ENCODE measurements at regions of chr7 and their contacts with region 1.

Region 1: DNA sequence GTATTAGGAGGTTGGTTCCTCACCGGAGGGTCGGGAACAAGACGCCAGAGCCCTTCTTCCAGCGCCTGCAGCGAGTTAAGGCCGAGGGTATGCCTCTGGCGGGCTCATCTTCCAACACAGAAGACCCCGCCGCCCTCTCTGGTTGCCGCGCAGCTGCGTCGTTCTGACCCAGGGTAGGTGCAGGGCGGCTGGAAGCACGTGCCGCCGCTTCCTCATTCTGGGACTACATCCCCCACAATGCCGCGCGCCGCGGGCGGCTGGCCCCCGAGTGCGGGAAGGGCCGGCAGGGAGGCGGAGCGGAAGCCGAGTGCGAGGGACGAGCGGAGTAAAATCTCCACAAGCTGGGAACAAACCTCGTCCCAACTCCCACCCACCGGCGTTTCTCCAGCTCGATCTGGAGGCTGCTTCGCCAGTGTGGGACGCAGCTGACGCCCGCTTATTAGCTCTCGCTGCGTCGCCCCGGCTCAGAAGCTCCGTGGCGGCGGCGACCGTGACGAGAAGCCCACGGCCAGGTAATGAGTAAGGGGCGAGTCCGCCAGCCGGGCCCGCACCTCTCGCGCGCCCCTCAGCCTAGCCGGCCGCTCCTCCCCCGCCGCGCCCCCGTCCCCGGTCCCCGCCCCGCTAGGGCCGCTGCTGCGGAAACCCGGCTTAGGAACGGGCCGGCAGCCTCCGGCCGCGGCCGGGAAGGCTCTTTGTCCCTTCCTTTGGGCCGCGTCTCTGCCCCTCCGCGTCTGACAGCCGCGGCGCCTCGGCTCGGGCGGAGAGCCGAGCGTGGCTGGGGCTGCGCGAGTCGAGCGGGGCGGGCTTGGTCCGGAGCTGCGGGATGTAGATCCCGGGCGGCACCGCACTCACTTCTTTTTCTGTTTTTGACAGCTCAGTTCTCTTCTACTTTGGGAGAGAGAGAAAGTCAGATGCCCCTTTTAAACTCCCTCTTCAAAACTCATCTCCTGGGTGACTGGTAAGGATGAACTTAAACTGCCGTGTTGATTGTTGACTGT is at the start of gene CCDC126:
- DNase-seq: peak; percentile 75
- H3K4me3 Mint-ChIP-seq: peak within 1 kb of the TSS; percentile 93
- H3K27ac Mint-ChIP-seq: peak within 1 kb of the TSS; percentile 89
- H3K4me1 Mint-ChIP-seq: peaks cover 63% of the 10 kb centered on the region
- H3K27me3 Mint-ChIP-seq: peaks cover 2% of the 10 kb centered on the region
- total RNA-seq, gene CCDC126: 8.2 and 10.7 TPM in 2 replicates

Region 2: DNA sequence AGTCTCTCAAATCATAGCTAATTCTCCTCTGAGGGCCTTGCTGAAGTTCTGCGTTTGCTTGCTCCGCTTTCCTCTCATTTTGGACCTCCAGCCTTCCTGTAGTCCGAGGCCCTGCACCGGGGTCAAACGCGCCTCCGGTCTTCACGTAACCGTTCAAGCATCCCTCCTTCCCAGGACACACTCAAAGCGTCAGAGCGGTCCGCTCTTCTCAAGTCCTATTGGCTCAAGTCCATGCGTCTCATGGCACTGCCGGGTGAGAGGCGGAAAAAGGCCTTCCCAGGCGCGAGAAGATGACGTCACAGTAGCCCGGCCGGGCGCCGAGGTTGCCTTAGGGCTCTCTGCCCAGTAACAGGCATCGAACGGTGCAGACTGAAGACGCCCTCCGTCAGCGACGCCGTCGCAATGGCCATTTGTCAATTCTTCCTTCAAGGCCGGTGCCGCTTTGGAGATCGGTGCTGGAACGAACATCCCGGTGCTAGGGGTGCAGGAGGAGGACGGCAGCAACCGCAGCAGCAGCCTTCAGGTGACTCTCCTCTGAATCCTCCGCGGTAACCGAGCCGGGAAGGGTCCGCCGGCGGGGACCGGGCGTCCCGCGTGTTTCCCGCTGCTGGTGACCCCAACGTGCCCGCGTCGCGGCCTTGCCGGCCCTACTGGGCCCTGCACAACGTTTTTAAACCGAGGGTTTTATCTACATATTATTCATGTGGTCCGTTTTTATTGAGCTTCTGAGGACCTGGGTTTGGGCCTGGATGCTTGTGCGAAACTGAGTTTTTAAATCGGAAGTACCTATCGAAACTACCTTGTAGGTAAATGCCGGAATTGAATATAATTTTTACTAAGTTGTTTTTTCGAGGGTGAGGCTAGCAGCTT is 415.5 kb before region 1 on chr7 and contains the start of gene NUP42:
- intact Hi-C with region 1: loop called (anchors 1 kb)
- DNase-seq: peak; percentile 96
- H3K4me3 Mint-ChIP-seq: peak within 1 kb of the TSS; percentile 90
- H3K27ac Mint-ChIP-seq: peak within 1 kb of the TSS; percentile 99
- H3K4me1 Mint-ChIP-seq: peaks cover 35% of the 10 kb centered on the region
- H3K27me3 Mint-ChIP-seq: peaks cover 8% of the 10 kb centered on the region
- total RNA-seq, gene NUP42: 52.7 and 55.2 TPM in 2 replicates

Region 3: DNA sequence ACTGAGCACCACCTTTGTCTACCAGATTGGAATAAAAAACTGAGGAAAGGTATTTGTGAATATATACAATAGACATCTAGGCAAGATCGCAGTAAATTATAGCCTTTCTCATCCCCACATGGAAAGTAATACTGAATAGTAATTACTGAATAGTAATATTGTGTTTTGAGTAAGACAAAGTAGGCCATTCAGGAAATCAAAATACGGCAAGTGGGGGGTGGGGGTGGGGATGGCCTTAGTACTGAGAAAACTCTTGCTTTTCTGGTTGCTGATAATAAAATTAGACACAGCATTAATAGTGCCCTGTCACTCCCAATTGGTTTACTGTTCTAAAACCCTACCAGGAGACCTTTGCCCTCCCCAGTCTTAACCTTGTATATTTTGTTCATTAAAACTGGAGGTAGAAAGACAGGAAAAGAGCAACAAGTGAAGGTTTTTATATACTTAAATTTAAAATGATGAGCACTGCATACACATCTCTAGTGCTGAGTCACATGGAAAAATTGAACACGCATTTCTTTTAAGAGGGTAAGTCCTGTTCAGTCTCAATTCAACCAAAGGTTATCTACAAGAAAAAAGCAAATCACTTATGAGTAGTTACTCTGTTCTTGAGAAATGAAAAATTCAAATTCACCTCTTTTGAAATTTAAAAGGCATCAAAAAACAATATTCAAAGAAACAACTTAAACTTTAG is 192.7 kb before region 1 on chr7:
- intact Hi-C with region 1: loop called (anchors 1 kb)
- DNase-seq: no peak
- H3K4me3 Mint-ChIP-seq: peak overlapping the region; percentile 7
- H3K27ac Mint-ChIP-seq: peak overlapping the region; percentile 82
- H3K4me1 Mint-ChIP-seq: peaks cover 14% of the 10 kb centered on the region
- H3K27me3 Mint-ChIP-seq: no peaks in the 10 kb centered on the region

Region 4: DNA sequence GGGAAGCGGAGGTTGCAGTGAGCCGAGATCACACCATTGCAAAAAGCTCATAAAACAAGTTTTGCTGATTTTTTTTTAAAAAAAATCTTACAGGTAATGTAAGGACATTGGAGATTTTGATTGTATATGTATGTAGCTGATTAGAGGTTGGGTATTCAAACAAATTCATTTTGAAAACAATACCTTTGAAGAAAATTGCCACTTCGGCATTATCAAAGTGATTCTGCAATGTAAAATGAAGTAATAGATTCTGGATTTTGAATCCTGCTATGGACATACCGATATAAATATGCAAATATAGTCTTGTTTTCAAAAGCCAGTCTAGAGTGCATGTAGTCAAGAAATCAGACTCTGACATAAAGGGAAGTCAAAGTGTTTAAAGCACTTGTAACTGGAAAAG is 114.7 kb before region 1 on chr7:
- intact Hi-C with region 1: no loop called
- DNase-seq: no peak
- H3K4me3 Mint-ChIP-seq: no peak overlapping the region
- H3K27ac Mint-ChIP-seq: no peak overlapping the region
- H3K4me1 Mint-ChIP-seq: no peaks in the 10 kb centered on the region
- H3K27me3 Mint-ChIP-seq: peaks cover 30% of the 10 kb centered on the region

Region 5: DNA sequence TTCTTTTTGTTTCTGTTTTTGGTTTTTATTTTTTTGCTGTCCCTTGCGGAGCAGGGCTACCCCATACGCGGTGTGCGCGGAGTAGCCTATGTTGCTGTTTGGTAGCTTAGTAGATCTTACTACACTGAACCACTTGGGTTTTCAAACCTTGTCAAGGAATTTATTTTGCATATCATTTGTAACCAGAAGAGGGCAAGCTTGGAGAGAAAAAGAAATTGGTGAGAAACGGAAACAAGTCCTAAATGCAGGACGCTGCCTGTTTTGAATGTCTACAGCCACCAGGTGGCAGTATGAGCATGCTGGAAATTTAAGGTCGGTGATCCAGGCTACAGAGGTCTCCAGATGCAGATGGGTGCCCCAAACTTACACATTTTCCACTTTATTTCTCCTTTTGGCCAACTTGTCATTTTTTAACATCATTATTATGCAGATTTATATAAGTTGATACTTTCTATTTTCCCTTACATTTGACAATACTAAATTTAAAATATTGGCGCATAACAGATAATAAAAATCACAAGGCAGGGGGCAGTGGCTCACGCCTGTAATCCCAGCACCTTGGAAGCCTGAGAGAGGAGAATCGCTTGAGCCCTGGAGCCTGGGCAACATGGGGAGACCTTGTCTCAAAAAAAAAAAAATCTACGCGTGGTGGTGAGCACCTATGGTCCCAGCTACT is 50.4 kb before region 1 on chr7:
- intact Hi-C with region 1: loop called (anchors 2 kb)
- DNase-seq: peak; percentile 63
- H3K4me3 Mint-ChIP-seq: no peak overlapping the region
- H3K27ac Mint-ChIP-seq: no peak overlapping the region
- H3K4me1 Mint-ChIP-seq: peaks cover 21% of the 10 kb centered on the region
- H3K27me3 Mint-ChIP-seq: peaks cover 2% of the 10 kb centered on the region

Region 6: GRCh38 chr7:23654508-23654907 is 57.1 kb after region 1 on chr7:
- intact Hi-C with region 1: no loop called
- DNase-seq: no peak
- H3K4me3 Mint-ChIP-seq: no peak overlapping the region
- H3K27ac Mint-ChIP-seq: no peak overlapping the region
- H3K4me1 Mint-ChIP-seq: no peaks in the 10 kb centered on the region
- H3K27me3 Mint-ChIP-seq: peaks cover 1% of the 10 kb centered on the region

Region 7: GRCh38 chr7:23893942-23894891 is 296.8 kb after region 1 on chr7:
- intact Hi-C with region 1: loop called (anchors 1 kb)
- DNase-seq: peak; percentile 24
- H3K4me3 Mint-ChIP-seq: peak overlapping the region; percentile 41
- H3K27ac Mint-ChIP-seq: peak overlapping the region; percentile 65
- H3K4me1 Mint-ChIP-seq: peaks cover 35% of the 10 kb centered on the region
- H3K27me3 Mint-ChIP-seq: peaks cover 9% of the 10 kb centered on the region

Region 8: GRCh38 chr7:24135003-24135817 is 537.8 kb after region 1 on chr7:
- intact Hi-C with region 1: no loop called
- DNase-seq: no peak
- H3K4me3 Mint-ChIP-seq: no peak overlapping the region
- H3K27ac Mint-ChIP-seq: no peak overlapping the region
- H3K4me1 Mint-ChIP-seq: peaks cover 8% of the 10 kb centered on the region
- H3K27me3 Mint-ChIP-seq: peaks cover 3% of the 10 kb centered on the region

Region 9: DNA sequence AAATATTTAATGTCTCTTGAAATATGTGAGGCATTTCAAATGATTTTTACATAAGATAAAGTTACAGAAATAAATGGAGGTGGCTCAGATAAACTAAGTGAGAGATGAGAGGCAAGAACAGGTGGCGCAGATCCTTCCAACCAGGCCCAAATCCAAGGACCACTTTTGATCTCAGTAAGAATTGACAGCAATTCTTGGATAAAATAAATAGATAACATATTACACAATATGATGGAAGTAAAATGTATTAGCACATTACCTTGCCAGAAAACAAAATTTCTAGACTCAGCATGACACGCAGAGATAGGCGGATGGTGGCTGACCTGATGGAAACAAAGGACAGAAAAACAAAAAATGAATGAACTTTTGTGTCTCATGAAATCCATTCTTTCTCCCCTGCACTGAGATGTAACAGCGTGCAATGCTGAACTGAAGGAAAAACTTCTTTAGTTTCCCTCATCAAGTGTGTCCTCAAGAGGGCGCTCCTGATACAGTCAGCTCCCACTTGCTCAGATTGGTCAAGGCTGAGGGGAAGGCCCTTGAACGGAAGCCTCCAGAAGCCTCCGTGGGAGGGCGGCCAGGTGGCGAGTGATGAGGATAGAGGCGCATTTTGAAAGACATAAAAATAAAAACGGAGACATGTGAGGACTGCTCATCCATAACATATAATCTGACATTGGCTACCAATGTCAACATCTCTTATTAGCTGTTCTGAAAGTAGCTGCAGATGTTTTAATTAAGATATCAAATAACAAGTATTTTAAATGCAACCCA is 1222.7 kb after region 1 on chr7:
- intact Hi-C with region 1: loop called (anchors 5 kb)
- DNase-seq: peak; percentile 75
- H3K4me3 Mint-ChIP-seq: peak overlapping the region; percentile 73
- H3K27ac Mint-ChIP-seq: peak overlapping the region; percentile 98
- H3K4me1 Mint-ChIP-seq: peaks cover 54% of the 10 kb centered on the region
- H3K27me3 Mint-ChIP-seq: peaks cover 2% of the 10 kb centered on the region

Region 10: GRCh38 chr7:25125137-25125946 is 1527.9 kb after region 1 on chr7 and contains the start of gene CYCS:
- intact Hi-C with region 1: loop called (anchors 2 kb)
- DNase-seq: peak; percentile 100
- H3K4me3 Mint-ChIP-seq: peak within 1 kb of the TSS; percentile 93
- H3K27ac Mint-ChIP-seq: peak within 1 kb of the TSS; percentile 99
- H3K4me1 Mint-ChIP-seq: peaks cover 29% of the 10 kb centered on the region
- H3K27me3 Mint-ChIP-seq: no peaks in the 10 kb centered on the region
- total RNA-seq, gene CYCS: 280 TPM in 2 replicates

Measured in activated T-helper 1 cell treated with anti-CD3 and anti-CD28 coated beads, Interleukin-12 subunit alpha, Interleukin-12 subunit beta, Interleukin-2, Interleukin-4 antibody, amounts not matched to agents 30 ng/mL and 10 ng/mL and 1 ng/mL, durations not matched to agents 14 hours and 24 hours and 36 hours (primary cell).